ENCODE measurements at regions of chr14 and their contacts with region 1.

Region 1: GRCh38 chr14:20489093-20489994 is 16.0 kb upstream of the RNASE10 start:
- DNase-seq: no peak
- ATAC-seq: peak; percentile 83
- H3K4me3 Mint-ChIP-seq: peak overlapping the region; percentile 75
- H3K27ac Mint-ChIP-seq: peak overlapping the region; percentile 84
- H3K4me1 Mint-ChIP-seq: peaks cover 70% of the 10 kb centered on the region
- H3K27me3 Mint-ChIP-seq: no peaks in the 10 kb centered on the region
- CTCF ChIP-seq: no peak

Region 2: DNA sequence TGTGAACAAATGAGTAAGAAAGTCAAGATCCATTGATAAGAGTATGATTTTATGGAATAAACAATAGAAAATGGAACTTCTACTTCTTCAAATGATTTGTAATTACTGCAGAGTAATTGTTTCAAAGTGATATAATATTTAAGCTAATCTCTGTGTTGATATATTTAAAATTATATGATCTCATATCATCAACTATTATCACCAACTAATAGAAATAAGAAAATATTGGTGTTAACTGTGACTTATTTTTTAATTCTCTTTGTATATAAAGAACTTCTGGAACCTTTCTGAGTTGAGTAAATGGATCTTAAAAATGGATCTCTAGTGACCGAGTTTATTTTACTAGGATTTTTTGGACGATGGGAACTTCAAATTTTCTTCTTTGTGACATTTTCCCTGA is 429.6 kb before region 1 on chr14 and contains the start of gene OR4L1:
- CTCF ChIA-PET with region 1: no interaction called
- POLR2A ChIA-PET with region 1: no interaction called
- intact Hi-C with region 1: no loop called
- DNase-seq: no peak
- ATAC-seq: no peak
- H3K4me3 Mint-ChIP-seq: no peak within 1 kb of the TSS
- H3K27ac Mint-ChIP-seq: no peak within 1 kb of the TSS
- H3K4me1 Mint-ChIP-seq: no peaks in the 10 kb centered on the region
- H3K27me3 Mint-ChIP-seq: peaks cover 2% of the 10 kb centered on the region
- CTCF ChIP-seq: no peak
- total RNA-seq, gene OR4L1: not detected in 2 replicates

Region 3: GRCh38 chr14:20461274-20462001 is 27.9 kb before region 1 on chr14 and contains the start of gene PIP4P1:
- CTCF ChIA-PET with region 1: no interaction called
- POLR2A ChIA-PET with region 1: interaction called, 39 read pairs
- intact Hi-C with region 1: loop called (anchors 2 kb)
- DNase-seq: peak; percentile 94
- ATAC-seq: peak; percentile 86
- H3K4me3 Mint-ChIP-seq: peak within 1 kb of the TSS; percentile 91
- H3K27ac Mint-ChIP-seq: peak within 1 kb of the TSS; percentile 96
- H3K4me1 Mint-ChIP-seq: peaks cover 55% of the 10 kb centered on the region
- H3K27me3 Mint-ChIP-seq: no peaks in the 10 kb centered on the region
- CTCF ChIP-seq: no peak
- total RNA-seq, gene PIP4P1: 84.8 and 87.3 TPM in 2 replicates

Region 4: DNA sequence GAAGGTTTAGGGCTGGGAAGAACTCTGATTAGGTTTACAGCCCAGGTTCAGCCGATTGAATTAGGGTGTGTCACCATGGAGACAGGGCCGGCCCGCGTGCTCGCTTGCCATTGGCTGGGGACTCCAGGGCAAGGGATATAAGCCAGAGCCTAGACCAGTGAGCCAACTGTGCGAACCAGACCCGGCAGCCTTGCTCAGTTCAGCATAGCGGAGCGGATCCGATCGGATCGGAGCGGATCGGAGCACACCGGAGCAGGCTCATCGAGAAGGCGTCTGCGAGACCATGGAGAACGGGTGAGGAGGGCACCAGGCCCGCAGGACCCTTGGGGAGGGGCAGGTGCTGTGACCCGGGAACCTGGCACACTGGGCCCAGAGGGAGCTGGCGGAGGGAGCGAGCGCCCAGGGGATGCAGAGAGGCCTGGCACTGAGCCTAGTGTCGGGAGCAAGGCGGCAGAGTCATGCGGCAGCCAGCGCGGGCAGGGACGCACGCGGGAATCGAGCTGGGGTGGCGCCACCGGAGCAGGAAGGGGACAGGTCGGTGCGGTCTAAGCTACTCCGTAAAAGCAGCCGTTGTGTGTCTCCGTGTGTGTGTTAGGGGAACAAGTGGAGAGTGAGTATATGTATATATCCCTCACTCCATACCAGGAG is 20.0 kb before region 1 on chr14 and contains the start of gene PNP:
- CTCF ChIA-PET with region 1: no interaction called
- POLR2A ChIA-PET with region 1: interaction called, 39 read pairs
- intact Hi-C with region 1: loop called (anchors 1 kb)
- DNase-seq: peak; percentile 78
- ATAC-seq: peak; percentile 89
- H3K4me3 Mint-ChIP-seq: peak within 1 kb of the TSS; percentile 95
- H3K27ac Mint-ChIP-seq: peak within 1 kb of the TSS; percentile 93
- H3K4me1 Mint-ChIP-seq: peaks cover 42% of the 10 kb centered on the region
- H3K27me3 Mint-ChIP-seq: no peaks in the 10 kb centered on the region
- CTCF ChIP-seq: no peak
- total RNA-seq, gene PNP: 87.2 and 88.0 TPM in 2 replicates

Region 5: DNA sequence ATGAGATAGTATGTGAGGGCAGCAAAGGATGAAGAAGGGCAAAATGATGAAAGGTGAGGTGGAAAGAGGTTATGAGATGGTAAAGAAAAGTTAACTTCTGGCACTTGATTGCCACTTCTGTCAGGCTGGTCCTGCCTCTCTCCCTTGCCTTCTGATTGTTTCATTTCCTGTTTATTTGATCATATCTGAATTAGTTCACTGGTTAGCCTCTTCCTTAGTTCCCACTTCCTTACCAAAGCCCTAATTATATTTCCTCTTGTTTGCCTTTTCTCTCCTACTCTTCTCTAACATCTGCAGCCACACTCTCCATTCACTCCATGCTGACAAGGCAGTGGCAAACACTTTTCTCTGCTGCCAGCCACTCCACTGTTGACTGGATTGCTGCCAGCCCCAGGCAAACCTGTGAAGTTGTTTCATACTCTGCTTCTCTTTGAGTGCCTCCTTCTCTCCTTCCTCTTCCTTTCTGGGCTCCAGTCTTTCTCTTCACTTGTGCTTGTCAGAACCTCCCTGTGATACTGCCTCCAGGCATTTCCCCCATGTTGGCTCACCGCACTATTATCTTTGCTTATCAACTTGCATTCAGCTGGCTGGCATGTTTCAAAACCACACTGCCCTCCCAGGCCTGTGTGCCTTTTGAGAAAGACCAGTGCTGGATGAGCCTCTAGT is 12.0 kb before region 1 on chr14:
- CTCF ChIA-PET with region 1: interaction called, 3 read pairs
- POLR2A ChIA-PET with region 1: interaction called, 6 read pairs
- intact Hi-C with region 1: loop called (anchors 1 kb)
- DNase-seq: no peak
- ATAC-seq: peak; percentile 80
- H3K4me3 Mint-ChIP-seq: peak overlapping the region; percentile 21
- H3K27ac Mint-ChIP-seq: peak overlapping the region; percentile 89
- H3K4me1 Mint-ChIP-seq: peaks cover 41% of the 10 kb centered on the region
- H3K27me3 Mint-ChIP-seq: no peaks in the 10 kb centered on the region
- CTCF ChIP-seq: no peak

Measured in activated B cell treated with CpG ODN at 0.5 μM for 24 hours (primary cell).